ENCODE measurements at regions of chr1 and their contacts with region 1.

Region 1: GRCh38 chr1:168709405-168710305 is 19.4 kb downstream of the DPT start:
- DNase-seq: peak; percentile 98
- H3K4me3 ChIP-seq: no peak overlapping the region
- H3K27ac ChIP-seq: peak overlapping the region; percentile 99
- H3K4me1 ChIP-seq: peaks cover 26% of the 10 kb centered on the region
- H3K27me3 ChIP-seq: no peaks in the 10 kb centered on the region
- CTCF ChIP-seq: peak in 1 of 2 donors; percentile 9

Region 2: GRCh38 chr1:168553680-168554553 is 155.7 kb before region 1 on chr1:
- CTCF ChIA-PET with region 1: no interaction called
- dilution Hi-C with region 1: no loop called
- in situ Hi-C with region 1: no loop called
- intact Hi-C with region 1: no loop called
- DNase-seq: no peak
- H3K4me3 ChIP-seq: no peak overlapping the region
- H3K27ac ChIP-seq: no peak overlapping the region
- H3K4me1 ChIP-seq: no peaks in the 10 kb centered on the region
- H3K27me3 ChIP-seq: no peaks in the 10 kb centered on the region
- CTCF ChIP-seq: no peak

Region 3: GRCh38 chr1:168653567-168653966 is 56.1 kb before region 1 on chr1:
- CTCF ChIA-PET with region 1: no interaction called
- dilution Hi-C with region 1: no loop called
- in situ Hi-C with region 1: no loop called
- intact Hi-C with region 1: loop called (anchors 5 kb)
- DNase-seq: peak; percentile 46
- H3K4me3 ChIP-seq: no peak overlapping the region
- H3K27ac ChIP-seq: peak overlapping the region; percentile 27
- H3K4me1 ChIP-seq: peaks cover 25% of the 10 kb centered on the region
- H3K27me3 ChIP-seq: no peaks in the 10 kb centered on the region
- CTCF ChIP-seq: no peak

Region 4: DNA sequence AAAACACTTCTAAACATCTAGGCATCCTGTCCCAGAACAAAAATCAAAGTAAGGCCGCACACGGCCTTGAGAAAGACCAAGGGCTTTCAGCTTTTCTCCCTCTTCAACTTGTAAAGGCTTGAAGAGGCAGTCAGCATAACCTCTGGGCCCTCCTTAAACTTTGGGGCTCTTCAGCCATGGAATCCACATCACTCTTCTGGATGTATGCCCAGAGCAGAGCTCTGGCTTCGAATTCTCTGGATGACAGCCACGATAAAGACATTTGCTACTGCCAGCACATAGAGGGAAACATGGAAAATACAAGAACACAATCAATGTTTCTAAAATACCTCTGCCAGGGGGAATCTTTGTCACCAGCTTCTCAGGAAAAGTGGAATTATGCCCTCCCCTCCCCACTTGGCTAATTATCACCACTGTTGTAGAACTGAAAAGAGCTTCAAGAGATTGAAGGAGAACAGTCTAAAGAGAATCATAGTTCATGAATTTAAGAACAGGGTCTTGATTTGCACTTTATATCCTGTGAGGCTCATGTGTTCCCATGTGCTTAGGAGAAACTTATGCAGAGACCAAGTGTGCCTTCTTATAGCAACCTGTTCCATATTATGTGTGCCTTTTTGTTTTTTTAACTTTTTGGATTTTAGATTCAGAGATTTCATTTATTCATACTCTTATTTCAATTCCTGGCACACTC is 58.4 kb after region 1 on chr1:
- CTCF ChIA-PET with region 1: no interaction called
- dilution Hi-C with region 1: no loop called
- in situ Hi-C with region 1: loop called in 1 of 2 experiments (anchors 10 kb)
- intact Hi-C with region 1: no loop called
- DNase-seq: peak; percentile 7
- H3K4me3 ChIP-seq: no peak overlapping the region
- H3K27ac ChIP-seq: no peak overlapping the region
- H3K4me1 ChIP-seq: peaks cover 9% of the 10 kb centered on the region
- H3K27me3 ChIP-seq: no peaks in the 10 kb centered on the region
- CTCF ChIP-seq: no peak

Region 5: DNA sequence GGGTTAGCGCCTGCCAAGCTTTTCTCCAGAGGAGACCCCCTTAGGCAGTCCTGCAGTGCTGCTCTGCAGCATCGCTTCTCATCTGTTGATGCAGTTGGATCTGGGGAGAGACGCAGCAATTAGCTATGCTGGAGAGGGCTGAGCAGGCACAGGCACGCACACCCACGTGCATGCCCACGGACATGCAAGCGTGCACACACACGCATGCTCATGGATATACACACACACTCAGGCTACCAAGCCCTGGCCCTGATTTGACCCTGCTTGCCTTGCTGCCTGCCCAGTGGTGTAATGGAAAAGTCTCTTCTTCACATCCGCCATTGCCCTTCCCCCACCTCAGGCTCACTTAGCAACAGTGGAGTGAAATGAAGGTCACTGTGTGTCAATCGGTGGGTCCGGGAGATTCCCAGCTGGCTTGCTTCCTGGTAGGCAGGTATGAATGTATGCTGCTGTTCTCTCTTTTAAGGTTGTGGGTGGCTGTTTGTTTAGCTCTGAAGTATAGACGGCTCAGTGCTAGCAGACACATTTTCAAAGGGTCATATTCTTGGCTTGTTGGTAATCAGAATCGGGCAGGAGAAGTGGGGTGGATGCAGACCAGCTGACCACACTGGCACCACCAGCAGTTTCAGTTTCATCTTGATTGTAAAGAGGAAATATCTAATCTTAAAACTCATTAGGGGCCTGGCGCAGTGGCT is 406.4 kb after region 1 on chr1:
- CTCF ChIA-PET with region 1: no interaction called
- dilution Hi-C with region 1: loop called (anchors 5 kb)
- in situ Hi-C with region 1: no loop called
- intact Hi-C with region 1: no loop called
- DNase-seq: peak; percentile 90
- H3K4me3 ChIP-seq: no peak overlapping the region
- H3K27ac ChIP-seq: peak overlapping the region; percentile 58
- H3K4me1 ChIP-seq: peaks cover 67% of the 10 kb centered on the region
- H3K27me3 ChIP-seq: no peaks in the 10 kb centered on the region
- CTCF ChIP-seq: no peak

Region 6: DNA sequence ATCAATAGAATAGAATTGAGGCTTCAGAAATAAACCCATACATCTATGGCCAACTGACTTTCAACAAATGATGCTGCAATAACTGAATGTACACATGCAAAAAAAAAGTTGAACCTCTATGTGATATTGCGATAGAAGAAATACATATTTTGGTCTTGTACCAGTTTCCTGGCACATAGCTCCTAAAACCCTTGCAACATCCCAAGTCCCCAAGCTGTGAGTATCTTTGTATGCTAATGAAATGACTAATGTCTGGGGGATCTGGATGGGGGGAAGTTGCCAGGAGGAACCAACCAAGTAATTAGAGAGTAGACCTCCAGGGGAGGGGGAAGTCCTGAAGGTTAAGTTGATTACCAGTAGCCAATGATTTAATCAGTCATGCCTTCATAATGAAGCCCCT is 682.8 kb after region 1 on chr1:
- CTCF ChIA-PET with region 1: no interaction called
- dilution Hi-C with region 1: no loop called
- in situ Hi-C with region 1: no loop called
- intact Hi-C with region 1: no loop called
- DNase-seq: no peak
- H3K4me3 ChIP-seq: no peak overlapping the region
- H3K27ac ChIP-seq: no peak overlapping the region
- H3K4me1 ChIP-seq: no peaks in the 10 kb centered on the region
- H3K27me3 ChIP-seq: no peaks in the 10 kb centered on the region
- CTCF ChIP-seq: no peak